Esophagus squamous epithelium (tissue), 5 donors: ENCODE measurements at regions of chr4 and their contacts with region 1.

Region 1: DNA sequence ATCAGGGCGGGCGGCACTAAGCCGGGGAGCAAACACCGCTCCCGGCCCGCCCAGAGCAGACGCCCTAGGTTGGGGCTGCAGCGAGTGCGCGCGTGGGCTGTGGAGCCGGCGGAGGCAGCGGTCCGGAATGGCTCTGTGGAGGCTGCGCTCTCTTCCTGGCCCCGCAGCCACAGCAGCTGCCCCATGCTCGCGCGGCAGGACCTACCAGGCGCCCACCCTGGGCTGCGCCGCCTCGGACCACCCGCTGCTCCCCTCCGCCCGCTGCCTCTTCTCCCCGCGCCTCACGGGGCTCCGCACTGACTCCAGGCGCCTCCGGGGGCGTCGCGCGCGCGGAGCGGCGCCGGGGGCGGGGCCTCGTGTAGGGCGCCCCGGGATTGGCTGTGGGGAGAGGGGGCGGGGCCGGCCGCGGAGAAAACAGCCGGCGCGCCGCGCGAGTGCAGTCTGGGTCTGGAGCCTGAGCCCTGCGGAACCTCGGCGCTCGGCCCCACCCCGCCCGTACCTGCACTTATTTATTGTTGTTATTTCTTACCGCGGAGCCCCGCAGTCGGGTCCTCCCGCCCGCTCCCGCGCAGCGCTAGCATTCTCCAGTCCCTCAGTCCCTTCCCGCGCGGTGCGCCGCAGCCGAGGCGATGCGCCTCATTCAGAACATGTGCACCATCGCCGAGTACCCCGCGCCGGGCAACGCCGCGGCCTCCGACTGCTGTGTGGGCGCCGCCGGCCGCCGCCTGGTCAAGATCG is at the start of gene RASL11B:
- DNase-seq: no peak
- H3K4me3 ChIP-seq: peak within 1 kb of the TSS; percentile 57 to 76 (median 66)
- H3K27ac ChIP-seq: peak within 1 kb of the TSS; percentile 38 to 80 (median 64)
- H3K4me1 ChIP-seq: peaks cover 7 to 21% (median 14%) of the 10 kb centered on the region in 3 donors
- H3K27me3 ChIP-seq: peaks cover 0 to 37% (median 0%) of the 10 kb centered on the region in 4 donors
- CTCF ChIP-seq: peak in 4 of 6 experiments; percentile 25 to 44 (median 32)
- POLR2A ChIP-seq: peak in 2 of 4 donors; percentile 43 to 62
- total RNA-seq, gene RASL11B: 0.15 to 0.97 (median 0.83) TPM

Region 2: GRCh38 chr4:52721968-52722815 is 139.9 kb before region 1 on chr4:
- intact Hi-C with region 1: loop called (anchors 10 kb)
- DNase-seq: peak; percentile 88
- H3K4me3 ChIP-seq: peak overlapping the region; percentile 65 to 95 (median 88)
- H3K27ac ChIP-seq: peak overlapping the region; percentile 83 to 94 (median 92)
- H3K4me1 ChIP-seq: peaks cover 7 to 16% (median 8%) of the 10 kb centered on the region in 3 donors
- H3K27me3 ChIP-seq: no peaks in the 10 kb centered on the region
- CTCF ChIP-seq: peak in 2 of 6 experiments; percentile 2 to 17
- POLR2A ChIP-seq: peak in 2 of 4 donors; percentile 63 to 71